HepG2 (cell line): ENCODE measurements at regions of chr13 and their contacts with region 1.

Region 1: DNA sequence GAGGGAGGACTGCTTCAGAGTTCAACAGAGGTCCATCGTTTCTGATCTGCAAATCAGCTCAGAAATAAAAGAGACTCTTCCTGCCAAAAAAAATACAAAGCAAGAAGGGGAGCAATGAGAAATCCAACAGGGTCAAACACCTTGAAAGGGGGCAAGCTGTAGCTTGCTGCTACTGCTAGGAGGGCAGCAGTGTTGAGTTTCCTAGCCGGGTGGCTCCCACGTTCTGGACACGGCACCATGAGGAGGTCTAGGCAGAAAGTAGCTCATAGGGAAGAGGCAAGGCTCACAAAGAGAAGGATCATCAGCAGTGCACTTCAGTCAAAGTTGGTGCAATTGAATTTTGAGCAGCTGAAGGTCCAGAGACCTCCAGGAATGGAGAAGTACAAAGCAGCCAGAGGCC is 75.3 kb downstream of the FOXO1 start:
- DNase-seq: no peak
- ATAC-seq: no peak
- H3K4me3 ChIP-seq: no peak overlapping the region
- H3K27ac ChIP-seq: no peak overlapping the region
- H3K4me1 ChIP-seq: peaks cover 84% of the 10 kb centered on the region
- H3K27me3 ChIP-seq: no peaks in the 10 kb centered on the region
- CTCF ChIP-seq: no peak
- EP300 ChIP-seq: no peak
- POLR2A ChIP-seq: no peak
- RAD21 ChIP-seq: no peak

Region 2: DNA sequence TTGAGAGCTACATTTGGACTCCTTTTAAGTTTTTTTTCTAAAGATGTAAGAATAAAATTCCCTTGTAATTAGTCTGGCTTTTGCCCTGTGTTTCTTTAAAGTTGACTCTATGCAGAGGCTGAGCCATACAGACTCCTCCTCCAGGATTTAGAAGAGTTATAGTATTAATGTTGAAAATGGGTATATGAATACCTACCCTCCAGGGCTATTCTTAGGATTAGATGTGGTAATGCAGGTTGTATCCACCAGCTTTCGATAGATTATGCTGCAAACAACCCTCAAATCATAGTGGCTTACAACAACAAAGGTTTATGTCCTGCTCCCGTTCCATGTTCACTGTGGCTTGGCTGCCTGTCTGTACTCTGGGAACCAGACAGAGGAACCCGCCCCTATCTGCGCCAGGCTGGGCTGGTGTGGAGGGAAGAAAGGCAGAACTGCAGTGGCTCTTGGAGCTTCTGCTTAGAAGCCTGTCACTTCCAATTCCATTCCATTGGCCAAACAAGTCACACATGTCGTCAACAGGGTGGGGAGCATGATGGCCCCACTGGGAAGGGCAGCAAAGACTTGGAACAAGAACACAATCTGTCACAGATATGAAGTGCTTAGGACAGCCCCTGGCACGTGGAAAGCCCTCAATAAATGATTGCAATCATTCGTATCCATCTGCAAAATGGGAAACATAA is 215.5 kb before region 1 on chr13:
- CTCF ChIA-PET with region 1: no interaction called
- POLR2A ChIA-PET with region 1: no interaction called
- in situ Hi-C with region 1: no loop called
- intact Hi-C with region 1: no loop called
- DNase-seq: no peak
- ATAC-seq: no peak
- H3K4me3 ChIP-seq: no peak overlapping the region
- H3K27ac ChIP-seq: no peak overlapping the region
- H3K4me1 ChIP-seq: peaks cover 23% of the 10 kb centered on the region
- H3K27me3 ChIP-seq: peaks cover 5 to 21% of the 10 kb centered on the region in 2 experiments; a peak in 2 of 5 replicates
- CTCF ChIP-seq: no peak
- EP300 ChIP-seq: no peak
- POLR2A ChIP-seq: no peak
- RAD21 ChIP-seq: no peak

Region 3: GRCh38 chr13:40490086-40490758 is 100.9 kb before region 1 on chr13:
- CTCF ChIA-PET with region 1: no interaction called
- POLR2A ChIA-PET with region 1: no interaction called
- in situ Hi-C with region 1: no loop called
- intact Hi-C with region 1: no loop called
- DNase-seq: no peak
- ATAC-seq: no peak
- H3K4me3 ChIP-seq: no peak overlapping the region
- H3K27ac ChIP-seq: no peak overlapping the region
- H3K4me1 ChIP-seq: peaks cover 20% of the 10 kb centered on the region
- H3K27me3 ChIP-seq: no peaks in the 10 kb centered on the region
- CTCF ChIP-seq: no peak
- EP300 ChIP-seq: no peak
- POLR2A ChIP-seq: no peak
- RAD21 ChIP-seq: no peak

Region 4: GRCh38 chr13:40632915-40633314 is 41.8 kb after region 1 on chr13:
- CTCF ChIA-PET with region 1: no interaction called
- POLR2A ChIA-PET with region 1: no interaction called
- in situ Hi-C with region 1: no loop called
- intact Hi-C with region 1: loop called (anchors 1 kb)
- DNase-seq: no peak
- ATAC-seq: no peak
- H3K4me3 ChIP-seq: no peak overlapping the region
- H3K27ac ChIP-seq: no peak overlapping the region
- H3K4me1 ChIP-seq: peaks cover 55% of the 10 kb centered on the region
- H3K27me3 ChIP-seq: no peaks in the 10 kb centered on the region
- CTCF ChIP-seq: no peak
- EP300 ChIP-seq: no peak
- POLR2A ChIP-seq: no peak
- RAD21 ChIP-seq: no peak